IMR-90 (cell line): ENCODE measurements at regions of chr12 and their contacts with region 1.

Region 1: DNA sequence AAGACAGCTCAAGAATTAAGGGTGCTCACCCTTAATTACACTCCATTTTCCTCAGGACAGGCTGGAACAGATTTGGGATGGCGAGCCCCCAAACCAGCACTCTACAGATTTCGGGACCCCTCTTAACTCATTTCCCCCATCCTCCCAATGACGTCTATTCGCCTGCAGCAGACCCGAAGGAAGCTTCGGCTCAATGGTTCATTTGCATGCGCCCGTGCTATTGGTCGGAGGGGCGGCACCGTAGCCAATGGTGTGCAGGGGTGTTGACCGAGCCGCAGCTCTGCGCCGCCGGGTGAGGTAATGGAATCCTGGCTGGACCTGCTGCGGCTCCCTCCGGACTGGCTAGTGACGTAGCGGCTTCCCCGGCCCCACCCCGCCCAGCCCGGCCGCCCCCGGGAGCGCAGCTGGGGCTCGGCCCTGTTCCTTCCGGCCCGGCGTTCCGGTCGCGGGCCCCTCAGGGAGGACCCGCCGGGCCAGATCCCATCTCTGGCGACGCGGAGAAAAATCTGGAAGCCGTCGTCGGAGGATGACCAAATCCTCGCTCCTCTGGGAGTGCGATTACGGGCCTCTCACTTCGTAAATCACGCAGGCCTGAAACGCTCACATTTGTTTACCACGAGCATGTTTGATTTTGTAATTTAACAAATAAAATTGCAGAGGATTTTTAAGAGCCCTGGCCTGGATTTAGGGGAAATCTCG is 18.3 kb upstream of the NR4A1 start:
- DNase-seq: peak; percentile 98
- ATAC-seq: peak; percentile 97
- H3K4me3 ChIP-seq: peak overlapping the region; percentile 51
- H3K27ac ChIP-seq: peak overlapping the region; percentile 77
- H3K4me1 ChIP-seq: peaks cover 8% of the 10 kb centered on the region
- H3K27me3 ChIP-seq: no peaks in the 10 kb centered on the region
- CTCF ChIP-seq: no peak
- POLR2A ChIP-seq: peak; percentile 86
- RAD21 ChIP-seq: no peak

Region 2: DNA sequence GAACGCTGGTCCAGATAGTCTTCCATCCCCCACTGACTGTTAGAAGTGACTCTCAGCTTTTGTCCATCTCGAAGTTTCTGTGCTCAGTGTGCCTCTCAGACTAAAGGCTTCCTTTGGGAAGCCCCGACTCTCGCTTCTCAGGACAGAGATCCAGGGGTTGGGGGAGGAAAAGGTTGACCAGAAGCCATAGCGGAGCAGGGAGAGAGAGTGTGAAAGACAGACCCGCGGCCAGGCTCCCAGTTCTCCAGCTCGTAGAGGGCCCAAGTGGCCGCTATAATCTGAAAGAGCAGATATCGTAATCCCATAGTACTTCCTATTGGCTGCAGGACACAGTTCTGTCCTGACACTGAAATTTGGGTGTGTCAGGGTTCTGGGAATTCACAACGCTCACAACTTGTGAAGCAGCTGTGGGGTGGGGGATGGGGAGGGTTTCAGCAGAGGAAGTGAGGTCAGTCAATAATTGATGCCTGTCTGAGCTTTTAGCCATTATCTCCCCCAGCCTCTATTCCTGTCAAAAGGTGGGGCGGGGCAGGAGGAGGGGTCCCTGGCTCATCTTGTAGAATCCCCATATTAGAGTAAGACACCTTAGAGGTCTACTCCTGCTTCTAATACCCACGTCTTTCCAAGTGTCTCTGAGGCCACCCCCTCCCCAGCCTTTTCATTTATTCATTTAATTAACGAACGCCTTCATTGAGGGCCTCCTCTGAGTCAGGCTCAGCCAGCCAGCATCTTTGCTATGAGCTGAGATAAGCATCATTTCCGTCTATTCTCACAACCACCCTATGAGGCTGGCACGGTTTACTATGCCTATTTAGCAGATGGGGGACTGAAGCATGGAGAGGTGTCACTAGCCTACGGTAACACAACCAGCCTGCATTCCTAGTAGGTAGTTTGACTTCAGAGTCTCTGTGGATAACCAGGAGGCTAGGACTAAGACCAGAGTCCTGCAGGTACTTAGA is 127.2 kb before region 1 on chr12:
- CTCF ChIA-PET with region 1: no interaction called
- POLR2A ChIA-PET with region 1: no interaction called
- dilution Hi-C with region 1: no loop called
- in situ Hi-C with region 1: no loop called
- intact Hi-C with region 1: no loop called
- DNase-seq: peak; percentile 40
- ATAC-seq: no peak; the same call in 1 of the 2 replicates
- H3K4me3 ChIP-seq: no peak overlapping the region
- H3K27ac ChIP-seq: peak overlapping the region; percentile 85
- H3K4me1 ChIP-seq: peaks cover 27% of the 10 kb centered on the region
- H3K27me3 ChIP-seq: no peaks in the 10 kb centered on the region
- CTCF ChIP-seq: no peak
- POLR2A ChIP-seq: no peak
- RAD21 ChIP-seq: no peak

Region 3: GRCh38 chr12:52069327-52070184 is 36.6 kb after region 1 on chr12 and contains the start of gene ATG101:
- CTCF ChIA-PET with region 1: interaction called, 9 read pairs
- POLR2A ChIA-PET with region 1: interaction called, 3 read pairs
- dilution Hi-C with region 1: no loop called
- in situ Hi-C with region 1: no loop called
- intact Hi-C with region 1: loop called (anchors 2 kb)
- DNase-seq: peak; percentile 96
- ATAC-seq: peak; percentile 98
- H3K4me3 ChIP-seq: peak within 1 kb of the TSS; percentile 64
- H3K27ac ChIP-seq: peak within 1 kb of the TSS; percentile 89
- H3K4me1 ChIP-seq: peaks cover 11% of the 10 kb centered on the region
- H3K27me3 ChIP-seq: no peaks in the 10 kb centered on the region
- CTCF ChIP-seq: peak; percentile 92
- POLR2A ChIP-seq: peak; percentile 90
- RAD21 ChIP-seq: peak; percentile 31
- total RNA-seq, gene ATG101: 158 and 167 TPM in 2 replicates

Region 4: DNA sequence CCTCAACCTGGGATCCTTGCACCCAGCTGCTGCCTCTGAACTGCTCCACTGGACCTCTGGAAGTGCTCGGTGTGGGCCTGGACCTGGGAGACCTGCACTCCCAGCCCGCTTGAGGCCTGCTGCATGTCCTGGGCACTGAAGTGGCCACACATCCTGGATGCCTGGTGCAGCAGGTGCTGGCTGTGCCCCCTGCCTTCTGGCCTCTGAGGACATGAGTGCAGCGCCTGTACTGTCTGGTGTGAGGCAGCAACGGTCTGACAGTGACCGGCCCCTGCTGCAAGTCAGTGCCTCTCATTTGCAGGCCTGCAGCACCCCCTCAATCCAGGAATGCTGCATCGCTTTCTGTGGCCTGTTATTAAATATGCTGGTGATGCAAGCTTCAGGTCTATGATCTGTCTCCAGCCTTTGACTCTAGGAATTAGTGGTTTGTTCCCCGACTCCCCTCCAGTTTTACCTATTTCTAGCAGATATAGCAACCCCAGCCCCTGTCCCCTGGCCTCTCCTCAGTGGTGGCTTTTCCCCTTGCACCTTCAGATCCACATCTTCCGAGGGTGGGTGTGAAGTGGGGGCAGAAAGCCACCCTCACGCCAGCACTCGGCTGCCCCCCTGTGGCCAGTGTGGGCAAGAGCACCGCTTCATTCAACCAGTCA is 50.2 kb after region 1 on chr12:
- CTCF ChIA-PET with region 1: interaction called, 4 read pairs
- POLR2A ChIA-PET with region 1: no interaction called
- dilution Hi-C with region 1: no loop called
- in situ Hi-C with region 1: loop called (anchors 5 kb)
- intact Hi-C with region 1: loop called (anchors 2 kb)
- DNase-seq: peak; percentile 71
- ATAC-seq: peak; percentile 68
- H3K4me3 ChIP-seq: no peak overlapping the region
- H3K27ac ChIP-seq: peak overlapping the region; percentile 66
- H3K4me1 ChIP-seq: peaks cover 30% of the 10 kb centered on the region
- H3K27me3 ChIP-seq: no peaks in the 10 kb centered on the region; the same call in 1 of the 2 replicates
- CTCF ChIP-seq: peak; percentile 87
- POLR2A ChIP-seq: no peak; the same call in 1 of the 2 replicates
- RAD21 ChIP-seq: peak; percentile 80

Region 5: DNA sequence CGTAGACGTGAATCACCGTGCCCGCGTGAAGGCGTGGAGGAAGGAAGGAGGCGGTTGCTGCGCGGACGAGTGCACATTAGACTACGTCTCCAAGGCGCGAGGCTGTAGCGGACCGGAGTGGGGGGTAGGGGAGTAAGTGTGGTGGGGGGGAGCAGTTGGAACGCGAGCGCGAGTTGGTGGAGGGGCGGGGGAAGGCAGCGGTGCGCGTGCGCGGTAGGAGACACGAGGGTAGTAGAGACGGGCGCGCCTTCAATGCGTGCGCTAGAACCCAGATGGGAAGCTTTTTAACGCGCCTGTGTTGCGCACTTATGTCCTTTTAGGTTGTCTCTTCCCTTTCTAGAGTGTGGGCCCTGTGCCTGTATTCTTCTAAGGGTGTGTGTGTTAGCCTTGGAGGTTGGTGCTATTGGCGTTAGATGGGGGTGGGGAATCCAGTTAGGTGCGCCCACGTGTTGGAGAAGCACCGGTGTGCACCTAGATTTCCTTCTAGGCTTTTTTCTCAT is 973.9 kb after region 1 on chr12:
- CTCF ChIA-PET with region 1: no interaction called
- POLR2A ChIA-PET with region 1: interaction called, 12 read pairs
- dilution Hi-C with region 1: no loop called
- in situ Hi-C with region 1: no loop called
- intact Hi-C with region 1: no loop called
- DNase-seq: peak; percentile 55
- ATAC-seq: peak; percentile 41
- H3K4me3 ChIP-seq: peak overlapping the region; percentile 90
- H3K27ac ChIP-seq: peak overlapping the region; percentile 95
- H3K4me1 ChIP-seq: peaks cover 7% of the 10 kb centered on the region
- H3K27me3 ChIP-seq: no peaks in the 10 kb centered on the region
- CTCF ChIP-seq: no peak
- POLR2A ChIP-seq: peak; percentile 55
- RAD21 ChIP-seq: no peak